Ovary (tissue), 10 donors: ENCODE measurements at regions of chr20 and their contacts with region 1.

Region 1: GRCh38 chr20:44642203-44643153 is 9.0 kb downstream of the ADA start:
- DNase-seq: peak; percentile 34 to 66 (median 55)
- H3K4me3 ChIP-seq: no peak overlapping the region
- H3K27ac ChIP-seq: peak overlapping the region in 1 of 2 donors; percentile 20
- H3K4me1 ChIP-seq: no peaks in the 10 kb centered on the region
- H3K27me3 ChIP-seq: no peaks in the 10 kb centered on the region
- CTCF ChIP-seq: no peak
- EP300 ChIP-seq: no peak
- POLR2A ChIP-seq: no peak

Region 2: DNA sequence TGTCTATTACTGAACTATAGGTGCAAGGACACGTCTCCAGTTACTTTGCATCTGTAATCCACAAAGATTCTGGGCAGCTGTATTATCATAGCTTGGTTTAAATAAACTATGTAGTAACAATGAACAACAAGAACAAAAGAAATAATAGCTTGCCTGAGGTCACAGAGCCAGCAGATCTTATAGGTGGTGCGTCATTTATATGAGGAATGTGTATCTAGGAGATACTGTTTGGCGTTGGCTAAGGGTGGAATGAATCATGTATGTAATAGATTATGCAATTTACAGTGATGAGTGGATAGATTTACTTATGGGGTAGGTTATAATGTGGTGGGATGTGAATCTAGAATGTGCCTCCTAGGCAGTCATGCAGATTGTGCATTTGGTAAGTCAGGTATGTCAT is 244.2 kb before region 1 on chr20:
- intact Hi-C with region 1: no loop called
- DNase-seq: no peak
- H3K4me3 ChIP-seq: no peak overlapping the region
- H3K27ac ChIP-seq: no peak overlapping the region
- H3K4me1 ChIP-seq: peaks cover 8% of the 10 kb centered on the region
- H3K27me3 ChIP-seq: no peaks in the 10 kb centered on the region
- CTCF ChIP-seq: no peak
- EP300 ChIP-seq: no peak
- POLR2A ChIP-seq: no peak

Region 3: DNA sequence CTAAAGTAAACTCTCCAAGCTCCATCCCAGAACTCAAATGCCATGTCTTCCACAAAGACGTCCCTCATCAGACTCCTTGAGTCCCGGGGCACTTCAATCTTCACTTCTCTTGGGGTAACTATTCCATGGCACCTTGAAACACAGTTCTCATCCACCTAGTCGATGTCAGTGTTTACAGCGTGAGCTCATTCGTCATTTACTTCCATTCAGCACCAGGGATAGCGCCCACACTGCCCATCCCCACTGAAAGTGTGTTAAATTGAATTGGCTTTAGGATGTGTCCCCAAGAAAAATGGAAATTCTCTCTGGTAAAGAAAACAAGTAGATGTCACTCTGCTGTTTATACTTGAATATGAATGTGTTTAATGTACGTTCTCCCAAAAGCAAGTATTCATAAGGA is 134.5 kb after region 1 on chr20:
- intact Hi-C with region 1: no loop called
- DNase-seq: no peak
- H3K4me3 ChIP-seq: no peak overlapping the region
- H3K27ac ChIP-seq: no peak overlapping the region
- H3K4me1 ChIP-seq: no peaks in the 10 kb centered on the region
- H3K27me3 ChIP-seq: no peaks in the 10 kb centered on the region
- CTCF ChIP-seq: no peak
- EP300 ChIP-seq: no peak
- POLR2A ChIP-seq: no peak

Region 4: DNA sequence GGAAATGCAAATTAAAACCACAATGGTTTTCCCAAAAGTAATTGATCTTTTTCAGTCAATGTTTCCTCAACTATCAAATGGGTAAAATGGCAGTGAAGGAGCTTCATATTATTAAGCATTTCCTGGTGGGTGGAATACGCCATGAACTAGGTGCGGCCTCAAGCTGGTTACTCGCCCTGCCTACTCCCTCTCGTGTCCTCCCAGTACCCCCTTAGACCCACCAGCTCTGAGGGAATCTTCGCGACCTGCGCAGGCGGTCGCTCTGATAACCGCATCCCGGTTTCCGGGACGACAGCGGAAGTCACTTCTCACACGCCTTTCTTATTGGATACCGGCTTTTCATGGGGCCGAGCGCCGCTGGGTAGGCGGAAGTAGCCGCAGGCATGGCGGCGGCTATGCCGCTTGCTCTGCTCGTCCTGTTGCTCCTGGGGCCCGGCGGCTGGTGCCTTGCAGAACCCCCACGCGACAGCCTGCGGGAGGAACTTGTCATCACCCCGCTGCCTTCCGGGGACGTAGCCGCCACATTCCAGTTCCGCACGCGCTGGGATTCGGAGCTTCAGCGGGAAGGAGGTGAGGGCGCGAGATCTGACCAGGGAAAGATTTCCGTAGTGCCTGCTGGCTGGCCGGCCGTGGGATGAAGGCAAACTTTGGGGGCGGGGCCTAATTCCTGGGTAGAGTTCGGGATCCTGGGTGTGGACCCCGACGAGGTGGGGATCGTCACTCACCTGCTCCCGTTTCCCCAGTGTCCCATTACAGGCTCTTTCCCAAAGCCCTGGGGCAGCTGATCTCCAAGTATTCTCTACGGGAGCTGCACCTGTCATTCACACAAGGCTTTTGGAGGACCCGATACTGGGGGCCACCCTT is 773.5 kb after region 1 on chr20 and contains the start of gene PIGT:
- intact Hi-C with region 1: loop called in 1 of 4 experiments (anchors 10 kb)
- DNase-seq: peak; percentile 75 to 86 (median 78)
- H3K4me3 ChIP-seq: peak within 1 kb of the TSS; percentile 95
- H3K27ac ChIP-seq: peak within 1 kb of the TSS; percentile 41 to 46
- H3K4me1 ChIP-seq: peaks cover 5% of the 10 kb centered on the region
- H3K27me3 ChIP-seq: no peaks in the 10 kb centered on the region
- CTCF ChIP-seq: no peak
- EP300 ChIP-seq: no peak
- POLR2A ChIP-seq: peak; percentile 69
- total RNA-seq, gene PIGT: 30.0 to 84.2 (median 69.3) TPM